Activated naive CD4-positive, alpha-beta T cell treated with anti-CD3 and anti-CD28 coated beads, Interleukin-2, amount 10 ng/mL, durations not matched to agents 7 days and 5 days (primary cell): ENCODE measurements at regions of chr4 and their contacts with region 1.

Region 1: GRCh38 chr4:86921608-86922252 is 13.1 kb upstream of the AFF1 start:
- DNase-seq: no peak
- H3K4me3 Mint-ChIP-seq: no peak overlapping the region
- H3K27ac Mint-ChIP-seq: no peak overlapping the region
- H3K4me1 Mint-ChIP-seq: peaks cover 11% of the 10 kb centered on the region
- H3K27me3 Mint-ChIP-seq: peaks cover 4% of the 10 kb centered on the region

Region 2: GRCh38 chr4:87118826-87119225 is 197.1 kb after region 1 on chr4:
- CTCF ChIA-PET with region 1: interaction called, 24 read pairs
- DNase-seq: no peak
- H3K4me3 Mint-ChIP-seq: no peak overlapping the region
- H3K27ac Mint-ChIP-seq: no peak overlapping the region
- H3K4me1 Mint-ChIP-seq: peaks cover 7% of the 10 kb centered on the region
- H3K27me3 Mint-ChIP-seq: no peaks in the 10 kb centered on the region

Region 3: GRCh38 chr4:87150498-87151261 is 228.9 kb after region 1 on chr4:
- CTCF ChIA-PET with region 1: interaction called, 15 read pairs
- DNase-seq: peak; percentile 55
- H3K4me3 Mint-ChIP-seq: no peak overlapping the region
- H3K27ac Mint-ChIP-seq: no peak overlapping the region
- H3K4me1 Mint-ChIP-seq: no peaks in the 10 kb centered on the region
- H3K27me3 Mint-ChIP-seq: no peaks in the 10 kb centered on the region

Region 4: GRCh38 chr4:87235020-87235671 is 313.4 kb after region 1 on chr4:
- CTCF ChIA-PET with region 1: interaction called, 13 read pairs
- DNase-seq: no peak
- H3K4me3 Mint-ChIP-seq: peak overlapping the region; percentile 61
- H3K27ac Mint-ChIP-seq: no peak overlapping the region
- H3K4me1 Mint-ChIP-seq: peaks cover 6% of the 10 kb centered on the region
- H3K27me3 Mint-ChIP-seq: peaks cover 25% of the 10 kb centered on the region

Region 5: DNA sequence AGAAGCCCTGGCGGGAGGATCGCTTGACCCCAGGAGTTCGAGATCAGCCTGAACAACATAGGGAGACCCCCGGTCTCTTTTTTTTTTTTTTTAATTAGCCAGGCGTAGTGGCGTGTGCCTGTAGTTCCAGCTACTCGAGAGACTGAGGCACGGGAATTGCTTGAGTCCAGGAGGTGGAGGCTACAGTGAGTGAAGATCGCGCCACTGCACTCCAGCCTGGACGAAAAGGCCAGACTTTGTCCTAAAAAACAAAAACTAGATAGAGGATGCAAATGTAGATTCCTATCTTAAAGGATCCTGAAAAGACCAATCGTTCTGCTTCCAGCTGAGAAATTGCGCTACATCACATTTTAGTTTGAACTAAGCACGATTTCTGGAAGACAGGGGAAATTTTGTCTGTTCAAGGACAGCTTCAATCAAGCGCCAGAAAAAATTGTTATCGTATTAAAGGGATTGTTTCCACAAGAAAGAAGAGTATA is 469.9 kb after region 1 on chr4:
- CTCF ChIA-PET with region 1: no interaction called
- DNase-seq: no peak
- H3K4me3 Mint-ChIP-seq: peak overlapping the region; percentile 88
- H3K27ac Mint-ChIP-seq: peak overlapping the region; percentile 74
- H3K4me1 Mint-ChIP-seq: peaks cover 38% of the 10 kb centered on the region
- H3K27me3 Mint-ChIP-seq: peaks cover 11% of the 10 kb centered on the region